ENCODE measurements at regions of chr6 and their contacts with region 1.

Region 1: GRCh38 chr6:37691904-37692806 is 5.5 kb downstream of the MDGA1 start:
- DNase-seq: peak; percentile 46 to 87 (median 72)
- ATAC-seq: peak; percentile 89
- H3K4me3 ChIP-seq: no peak overlapping the region
- H3K4me3 Mint-ChIP-seq: peak overlapping the region in 1 of 10 donors; percentile 45
- H3K27ac ChIP-seq: no peak overlapping the region
- H3K27ac Mint-ChIP-seq: no peak overlapping the region
- H3K4me1 ChIP-seq: peaks cover 11 to 12% of the 10 kb centered on the region in 2 donors
- H3K4me1 Mint-ChIP-seq: peaks cover 9 to 26% (median 21%) of the 10 kb centered on the region in 7 donors
- H3K27me3 ChIP-seq: peaks cover 0 to 4% of the 10 kb centered on the region in 2 donors
- H3K27me3 Mint-ChIP-seq: peaks cover 26 to 45% (median 34%) of the 10 kb centered on the region in 5 donors

Region 2: GRCh38 chr6:36985808-36986703 is 706.1 kb before region 1 on chr6 and contains the start of gene MTCH1:
- CTCF ChIA-PET with region 1: interaction called, 3 read pairs
- POLR2A ChIA-PET with region 1: no interaction called
- intact Hi-C with region 1: loop called in 1 of 2 experiments (anchors 10 kb)
- DNase-seq: peak; percentile 85 to 98 (median 92)
- ATAC-seq: peak; percentile 93
- H3K4me3 ChIP-seq: peak within 1 kb of the TSS; percentile 98
- H3K4me3 Mint-ChIP-seq: peak within 1 kb of the TSS in 6 of 10 donors; percentile 98 to 100 (median 100)
- H3K27ac ChIP-seq: peak within 1 kb of the TSS; percentile 96
- H3K27ac Mint-ChIP-seq: peak within 1 kb of the TSS in 7 of 9 donors; percentile 98 to 99 (median 99)
- H3K4me1 ChIP-seq: peaks cover 22 to 27% of the 10 kb centered on the region in 2 donors
- H3K4me1 Mint-ChIP-seq: peaks cover 12 to 26% (median 18%) of the 10 kb centered on the region in 7 donors
- H3K27me3 ChIP-seq: no peaks in the 10 kb centered on the region
- H3K27me3 Mint-ChIP-seq: peaks cover 0 to 17% (median 0%) of the 10 kb centered on the region in 5 donors
- total RNA-seq, gene MTCH1: 123 to 198 (median 130) TPM

Region 3: GRCh38 chr6:37324131-37325033 is 367.8 kb before region 1 on chr6:
- CTCF ChIA-PET with region 1: interaction called, 17 read pairs
- POLR2A ChIA-PET with region 1: no interaction called
- intact Hi-C with region 1: loop called (anchors 1 kb)
- DNase-seq: no peak
- ATAC-seq: no peak
- H3K4me3 ChIP-seq: no peak overlapping the region
- H3K4me3 Mint-ChIP-seq: no peak overlapping the region
- H3K27ac ChIP-seq: no peak overlapping the region
- H3K27ac Mint-ChIP-seq: peak overlapping the region in 5 of 9 donors; percentile 2 to 48 (median 11)
- H3K4me1 ChIP-seq: no peaks in the 10 kb centered on the region
- H3K4me1 Mint-ChIP-seq: peaks cover 0 to 16% (median 4%) of the 10 kb centered on the region in 7 donors
- H3K27me3 ChIP-seq: no peaks in the 10 kb centered on the region
- H3K27me3 Mint-ChIP-seq: no peaks in the 10 kb centered on the region

Region 4: DNA sequence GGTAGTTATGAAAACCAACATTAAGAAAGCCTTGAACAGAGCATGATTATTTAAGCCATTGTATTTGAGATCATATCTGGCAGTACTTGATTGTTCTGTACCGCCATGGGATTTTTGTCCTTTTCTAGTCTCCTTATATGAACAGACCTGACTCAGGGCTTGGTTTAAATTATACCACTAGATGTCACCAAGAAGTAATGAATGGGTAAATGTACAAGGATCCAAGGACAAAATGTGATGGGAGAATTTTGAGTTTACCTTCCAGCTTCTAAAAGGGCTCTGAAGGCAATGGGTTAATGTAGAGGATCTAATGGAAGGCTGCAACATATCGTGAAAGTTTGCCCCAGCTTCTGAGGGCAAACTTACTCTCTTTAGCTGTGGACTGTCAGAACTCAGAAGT is 326.4 kb before region 1 on chr6:
- CTCF ChIA-PET with region 1: interaction called, 3 read pairs
- POLR2A ChIA-PET with region 1: no interaction called
- intact Hi-C with region 1: loop called in 1 of 2 experiments (anchors 5 kb)
- DNase-seq: no peak
- ATAC-seq: no peak
- H3K4me3 ChIP-seq: no peak overlapping the region
- H3K4me3 Mint-ChIP-seq: no peak overlapping the region
- H3K27ac ChIP-seq: no peak overlapping the region
- H3K27ac Mint-ChIP-seq: no peak overlapping the region
- H3K4me1 ChIP-seq: no peaks in the 10 kb centered on the region
- H3K4me1 Mint-ChIP-seq: peaks cover 0 to 13% (median 4%) of the 10 kb centered on the region in 7 donors
- H3K27me3 ChIP-seq: no peaks in the 10 kb centered on the region
- H3K27me3 Mint-ChIP-seq: no peaks in the 10 kb centered on the region

Region 5: DNA sequence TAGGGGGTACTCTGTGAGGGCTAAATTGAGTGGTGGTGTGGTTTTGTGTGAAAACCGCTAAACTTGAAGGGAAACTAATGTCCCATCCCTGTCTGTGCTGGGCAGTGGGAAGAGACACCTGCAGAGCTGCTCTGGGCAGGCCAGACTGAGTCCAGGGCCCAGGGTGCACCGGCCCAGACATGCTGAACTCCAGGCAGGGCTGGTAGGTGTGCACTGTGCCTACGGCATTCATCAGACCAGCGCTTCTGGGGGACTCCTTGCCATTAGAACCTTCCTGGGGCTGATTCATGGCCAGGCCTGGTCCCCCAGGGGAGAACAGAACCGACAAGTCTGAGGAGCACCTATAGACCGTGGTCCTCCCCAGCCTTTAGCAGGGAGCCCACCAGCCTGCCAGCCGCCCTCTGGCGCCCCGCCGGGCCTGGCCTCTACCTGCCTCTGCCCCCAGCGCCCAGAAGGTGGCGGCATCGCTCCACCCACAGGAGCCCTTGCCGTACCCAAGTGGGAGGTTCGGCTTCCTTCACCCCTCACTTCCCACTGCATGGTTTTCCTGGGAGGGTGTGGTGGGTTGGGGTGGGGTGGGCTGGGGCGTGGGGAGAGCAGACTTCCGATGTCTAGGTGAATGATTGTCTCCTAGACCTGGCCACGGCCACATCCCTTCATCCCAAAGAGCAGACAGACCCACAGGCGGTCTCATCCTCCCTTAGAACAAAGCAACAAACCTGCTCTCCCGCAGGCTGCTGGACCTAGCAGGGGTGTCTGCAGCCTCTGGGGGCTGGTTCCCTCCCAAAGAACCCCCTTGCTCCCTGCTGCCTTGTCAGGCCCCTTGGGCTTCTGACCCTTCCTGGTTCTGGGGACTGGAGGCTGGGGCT is 208.0 kb before region 1 on chr6:
- CTCF ChIA-PET with region 1: interaction called, 10 read pairs
- POLR2A ChIA-PET with region 1: interaction called, 3 read pairs
- intact Hi-C with region 1: loop called (anchors 1 kb)
- DNase-seq: peak; percentile 56 to 85 (median 70)
- ATAC-seq: peak; percentile 85
- H3K4me3 ChIP-seq: no peak overlapping the region
- H3K4me3 Mint-ChIP-seq: no peak overlapping the region
- H3K27ac ChIP-seq: no peak overlapping the region
- H3K27ac Mint-ChIP-seq: peak overlapping the region in 2 of 9 donors; percentile 25 to 36
- H3K4me1 ChIP-seq: peaks cover 9 to 16% of the 10 kb centered on the region in 2 donors
- H3K4me1 Mint-ChIP-seq: peaks cover 13 to 35% (median 20%) of the 10 kb centered on the region in 7 donors
- H3K27me3 ChIP-seq: no peaks in the 10 kb centered on the region
- H3K27me3 Mint-ChIP-seq: no peaks in the 10 kb centered on the region

Region 6: GRCh38 chr6:37582306-37582705 is 109.8 kb before region 1 on chr6:
- CTCF ChIA-PET with region 1: no interaction called
- POLR2A ChIA-PET with region 1: no interaction called
- intact Hi-C with region 1: loop called (anchors 1 to 2 kb)
- DNase-seq: no peak
- ATAC-seq: no peak
- H3K4me3 ChIP-seq: no peak overlapping the region
- H3K4me3 Mint-ChIP-seq: no peak overlapping the region
- H3K27ac ChIP-seq: no peak overlapping the region
- H3K27ac Mint-ChIP-seq: peak overlapping the region in 1 of 9 donors; percentile 59
- H3K4me1 ChIP-seq: no peaks in the 10 kb centered on the region
- H3K4me1 Mint-ChIP-seq: no peaks in the 10 kb centered on the region
- H3K27me3 ChIP-seq: no peaks in the 10 kb centered on the region
- H3K27me3 Mint-ChIP-seq: peaks cover 0 to 8% (median 0%) of the 10 kb centered on the region in 5 donors

Region 7: GRCh38 chr6:38493931-38494547 is 801.9 kb after region 1 on chr6:
- CTCF ChIA-PET with region 1: no interaction called
- POLR2A ChIA-PET with region 1: no interaction called
- intact Hi-C with region 1: loop called in 1 of 2 experiments (anchors 2 kb)
- DNase-seq: peak; percentile 36 to 78 (median 68)
- ATAC-seq: peak; percentile 70
- H3K4me3 ChIP-seq: no peak overlapping the region
- H3K4me3 Mint-ChIP-seq: no peak overlapping the region
- H3K27ac ChIP-seq: no peak overlapping the region
- H3K27ac Mint-ChIP-seq: no peak overlapping the region
- H3K4me1 ChIP-seq: no peaks in the 10 kb centered on the region
- H3K4me1 Mint-ChIP-seq: peaks cover 0 to 5% (median 4%) of the 10 kb centered on the region in 7 donors
- H3K27me3 ChIP-seq: no peaks in the 10 kb centered on the region
- H3K27me3 Mint-ChIP-seq: no peaks in the 10 kb centered on the region

Measured in naive thymus-derived CD4-positive, alpha-beta T cell (primary cell).